ENCODE measurements at regions of chr12 and their contacts with region 1.

Region 1: GRCh38 chr12:1583421-1584078 is 10.8 kb downstream of the FBXL14 start:
- DNase-seq: peak; percentile 81
- H3K4me3 ChIP-seq: peak overlapping the region; percentile 7 to 26; a peak in 2 of 4 replicates
- H3K27ac ChIP-seq: peak overlapping the region in 1 of 2 experiments; percentile 33; a peak in 2 of 4 replicates
- H3K4me1 ChIP-seq: peaks cover 0 to 34% of the 10 kb centered on the region in 2 experiments; a peak in 3 of 4 replicates
- H3K27me3 ChIP-seq: no peaks in the 10 kb centered on the region
- CTCF ChIP-seq: peak; percentile 93
- EP300 ChIP-seq: no peak
- RAD21 ChIP-seq: peak; percentile 97

Region 2: DNA sequence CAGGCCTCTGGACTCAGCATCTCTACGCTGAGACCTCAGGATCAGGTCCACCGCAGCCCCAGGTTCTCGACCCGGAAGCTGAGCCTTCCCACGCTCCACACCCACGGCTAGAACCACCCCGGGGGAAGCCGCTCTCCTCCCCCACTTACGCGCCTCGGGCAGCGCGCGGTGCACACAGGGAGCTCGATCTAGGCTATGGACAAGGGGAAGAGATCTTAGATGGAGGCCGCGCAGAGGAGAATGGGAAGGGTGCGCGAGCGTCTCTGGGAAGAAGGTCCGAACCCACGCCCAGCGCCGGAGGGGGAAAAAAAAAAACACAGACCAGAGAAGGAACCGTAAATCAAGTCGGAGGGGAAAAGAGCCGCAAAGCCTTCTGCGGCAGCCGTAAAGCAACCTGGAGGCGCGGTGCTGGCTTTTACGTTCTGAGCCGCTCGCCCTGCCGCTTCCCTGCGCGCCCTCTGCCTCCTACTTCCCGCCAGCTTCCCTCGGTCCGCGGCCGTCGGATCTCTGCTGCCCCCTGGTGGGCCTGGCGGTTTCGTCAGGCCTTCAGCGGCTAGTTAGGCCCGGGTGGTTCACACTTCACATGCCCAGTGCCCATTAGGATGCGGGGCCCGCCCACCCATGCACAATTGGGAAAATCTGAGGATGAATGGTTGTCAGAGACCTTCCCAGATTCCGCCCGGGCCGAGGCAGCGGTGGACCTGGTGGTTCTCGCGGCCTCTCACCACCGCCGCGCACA is 633.9 kb before region 1 on chr12 and contains the start of gene RAD52:
- CTCF ChIA-PET with region 1: interaction called, 16 read pairs
- POLR2A ChIA-PET with region 1: no interaction called
- DNase-seq: peak; percentile 91
- H3K4me3 ChIP-seq: peak within 1 kb of the TSS; percentile 69 to 94
- H3K27ac ChIP-seq: peak within 1 kb of the TSS; percentile 95
- H3K4me1 ChIP-seq: peaks cover 2 to 6% of the 10 kb centered on the region in 2 experiments; a peak in 3 of 4 replicates
- H3K27me3 ChIP-seq: no peaks in the 10 kb centered on the region
- CTCF ChIP-seq: peak; percentile 91
- EP300 ChIP-seq: peak; percentile 18 to 69; a peak in 1 of 4 replicates
- RAD21 ChIP-seq: peak; percentile 79
- polyA plus RNA-seq, gene RAD52: 11.2 and 12.1 TPM in 2 replicates

Region 3: GRCh38 chr12:1108276-1108675 is 475.3 kb before region 1 on chr12:
- CTCF ChIA-PET with region 1: interaction called, 19 read pairs
- POLR2A ChIA-PET with region 1: no interaction called
- DNase-seq: no peak
- H3K4me3 ChIP-seq: no peak overlapping the region
- H3K27ac ChIP-seq: no peak overlapping the region
- H3K4me1 ChIP-seq: no peaks in the 10 kb centered on the region
- H3K27me3 ChIP-seq: no peaks in the 10 kb centered on the region
- CTCF ChIP-seq: no peak
- EP300 ChIP-seq: no peak
- RAD21 ChIP-seq: no peak

Region 4: DNA sequence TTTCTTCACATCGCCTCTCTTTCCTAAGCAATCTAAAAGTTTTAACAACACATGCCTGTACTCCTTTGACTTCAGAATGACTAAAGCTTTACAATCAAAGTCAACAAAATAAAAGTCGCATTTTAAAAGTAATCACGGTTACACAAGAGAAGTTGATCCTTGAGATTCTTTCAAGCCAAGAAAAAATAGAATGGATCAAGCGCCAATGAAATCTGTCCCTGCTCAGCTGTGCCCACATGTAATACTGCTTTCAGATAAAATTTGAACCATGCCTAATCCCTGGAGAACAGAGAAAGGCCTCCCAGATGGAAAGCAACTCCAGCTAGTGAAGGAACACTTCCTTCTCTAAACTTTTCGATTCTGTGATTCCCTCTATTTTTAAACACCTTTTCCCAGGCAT is 102.2 kb before region 1 on chr12:
- CTCF ChIA-PET with region 1: no interaction called
- POLR2A ChIA-PET with region 1: no interaction called
- DNase-seq: no peak
- H3K4me3 ChIP-seq: no peak overlapping the region
- H3K27ac ChIP-seq: no peak overlapping the region
- H3K4me1 ChIP-seq: peaks cover 0 to 2% of the 10 kb centered on the region in 2 experiments; a peak in 2 of 4 replicates
- H3K27me3 ChIP-seq: no peaks in the 10 kb centered on the region
- CTCF ChIP-seq: no peak
- EP300 ChIP-seq: no peak
- RAD21 ChIP-seq: no peak

Region 5: GRCh38 chr12:1534748-1535147 is 48.8 kb before region 1 on chr12:
- CTCF ChIA-PET with region 1: interaction called, 13 read pairs
- POLR2A ChIA-PET with region 1: no interaction called
- DNase-seq: no peak
- H3K4me3 ChIP-seq: no peak overlapping the region; a peak in 1 of 4 replicates
- H3K27ac ChIP-seq: no peak overlapping the region
- H3K4me1 ChIP-seq: peaks cover 7 to 22% of the 10 kb centered on the region in 2 experiments; a peak in 3 of 4 replicates
- H3K27me3 ChIP-seq: no peaks in the 10 kb centered on the region
- CTCF ChIP-seq: no peak
- EP300 ChIP-seq: no peak
- RAD21 ChIP-seq: no peak

Region 6: GRCh38 chr12:1594261-1595025 is 10.9 kb after region 1 on chr12 and contains the start of gene FBXL14:
- CTCF ChIA-PET with region 1: interaction called, 38 read pairs
- POLR2A ChIA-PET with region 1: interaction called, 4 read pairs
- DNase-seq: peak; percentile 92
- H3K4me3 ChIP-seq: peak within 1 kb of the TSS; percentile 76 to 80
- H3K27ac ChIP-seq: peak within 1 kb of the TSS; percentile 65 to 95
- H3K4me1 ChIP-seq: peaks cover 30 to 33% of the 10 kb centered on the region in 2 experiments
- H3K27me3 ChIP-seq: no peaks in the 10 kb centered on the region
- CTCF ChIP-seq: no peak
- EP300 ChIP-seq: no peak
- RAD21 ChIP-seq: no peak
- polyA plus RNA-seq, gene FBXL14: 11.3 and 12.8 TPM in 2 replicates

Region 7: GRCh38 chr12:1661553-1662335 is 78.2 kb after region 1 on chr12:
- CTCF ChIA-PET with region 1: no interaction called
- POLR2A ChIA-PET with region 1: no interaction called
- DNase-seq: peak; percentile 93
- H3K4me3 ChIP-seq: peak overlapping the region; percentile 52 to 58; a peak in 3 of 4 replicates
- H3K27ac ChIP-seq: peak overlapping the region in 1 of 2 experiments; percentile 67; a peak in 2 of 4 replicates
- H3K4me1 ChIP-seq: peaks cover 0 to 2% of the 10 kb centered on the region in 2 experiments; a peak in 1 of 4 replicates
- H3K27me3 ChIP-seq: no peaks in the 10 kb centered on the region
- CTCF ChIP-seq: no peak
- EP300 ChIP-seq: peak in 1 of 2 experiments; percentile 22; a peak in 1 of 4 replicates
- RAD21 ChIP-seq: no peak

Measured in SK-N-SH (cell line).